ENCODE measurements at regions of chr3 and their contacts with region 1.

Region 1: GRCh38 chr3:134308350-134308891 is 57.8 kb upstream of the RYK start:
- DNase-seq: peak; percentile 67
- H3K4me3 ChIP-seq: no peak overlapping the region
- H3K27ac ChIP-seq: peak overlapping the region; percentile 19
- H3K4me1 ChIP-seq: peaks cover 40% of the 10 kb centered on the region
- H3K27me3 ChIP-seq: no peaks in the 10 kb centered on the region
- CTCF ChIP-seq: peak; percentile 99

Region 2: DNA sequence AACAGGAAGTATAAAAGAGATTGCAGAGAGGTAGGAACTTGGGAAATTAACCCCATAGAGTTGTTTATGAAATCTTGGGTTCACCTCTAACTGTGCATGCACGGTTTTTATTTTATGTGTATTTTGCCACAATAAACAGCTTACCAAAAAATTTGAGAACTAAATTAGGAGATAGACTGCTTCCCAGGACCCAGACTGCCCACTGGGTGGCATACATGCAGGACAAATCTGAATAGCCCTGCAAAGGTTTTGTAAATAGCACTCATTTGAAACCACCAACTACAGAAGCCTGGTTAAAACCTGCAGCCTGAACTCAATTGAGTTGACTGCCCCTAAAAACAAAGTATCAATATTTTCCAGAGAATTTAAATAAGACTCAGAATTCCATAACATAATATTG is 182.3 kb before region 1 on chr3:
- CTCF ChIA-PET with region 1: no interaction called
- dilution Hi-C with region 1: no loop called
- in situ Hi-C with region 1: no loop called
- intact Hi-C with region 1: loop called (anchors 10 kb)
- DNase-seq: no peak
- H3K4me3 ChIP-seq: no peak overlapping the region
- H3K27ac ChIP-seq: no peak overlapping the region
- H3K4me1 ChIP-seq: no peaks in the 10 kb centered on the region
- H3K27me3 ChIP-seq: no peaks in the 10 kb centered on the region
- CTCF ChIP-seq: peak; percentile 17 to 35

Region 3: DNA sequence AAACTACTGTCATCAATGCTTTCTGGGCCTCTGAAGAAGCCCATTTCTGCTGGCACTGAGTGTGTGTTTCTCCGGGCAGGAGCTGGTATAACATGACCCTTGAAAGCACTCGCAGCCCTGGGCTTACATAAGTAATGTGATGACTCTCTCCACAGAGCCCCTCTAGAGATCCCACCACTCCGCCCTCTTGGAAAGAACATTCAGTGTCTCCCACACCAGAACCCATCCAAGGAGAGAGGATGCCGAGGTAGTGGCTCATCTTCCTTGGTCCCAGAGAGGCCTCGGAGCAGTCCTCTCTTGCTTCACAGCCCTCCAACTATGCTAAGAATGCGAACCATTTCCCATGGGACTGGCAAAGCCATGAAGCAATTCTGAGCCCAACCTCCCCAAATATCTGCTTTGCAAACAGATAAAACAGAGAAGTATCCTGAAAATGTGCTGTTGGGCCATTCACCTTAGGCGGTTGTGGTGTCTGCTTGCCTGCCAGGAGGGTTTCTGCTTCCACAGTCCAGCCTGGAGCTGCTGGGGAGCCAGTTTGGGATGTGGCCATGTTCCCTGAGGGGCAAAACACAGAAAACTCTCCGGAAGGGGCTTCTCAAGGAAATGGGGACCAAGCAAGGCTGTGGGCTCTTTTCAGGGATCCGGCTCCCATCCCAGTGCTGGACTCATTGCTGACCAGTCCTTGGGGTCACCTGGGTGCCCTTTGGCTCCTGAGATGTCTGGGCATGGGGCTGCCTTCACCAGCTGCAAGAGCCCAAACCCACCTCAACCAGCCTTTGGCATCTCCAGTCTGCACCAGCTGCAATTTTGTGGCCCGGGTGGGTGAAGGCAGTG is 18.6 kb after region 1 on chr3:
- CTCF ChIA-PET with region 1: no interaction called
- dilution Hi-C with region 1: no loop called
- in situ Hi-C with region 1: no loop called
- intact Hi-C with region 1: loop called (anchors 1 kb)
- DNase-seq: peak; percentile 86
- H3K4me3 ChIP-seq: peak overlapping the region in 1 of 3 experiments; percentile 6
- H3K27ac ChIP-seq: peak overlapping the region; percentile 84
- H3K4me1 ChIP-seq: peaks cover 75% of the 10 kb centered on the region
- H3K27me3 ChIP-seq: no peaks in the 10 kb centered on the region
- CTCF ChIP-seq: no peak

Region 4: GRCh38 chr3:134357261-134358184 is 49.1 kb after region 1 on chr3:
- CTCF ChIA-PET with region 1: interaction called, 3 read pairs
- dilution Hi-C with region 1: no loop called
- in situ Hi-C with region 1: loop called (anchors 5 kb)
- intact Hi-C with region 1: loop called (anchors 1 kb)
- DNase-seq: peak; percentile 82
- H3K4me3 ChIP-seq: no peak overlapping the region
- H3K27ac ChIP-seq: peak overlapping the region; percentile 43
- H3K4me1 ChIP-seq: peaks cover 70% of the 10 kb centered on the region
- H3K27me3 ChIP-seq: no peaks in the 10 kb centered on the region
- CTCF ChIP-seq: no peak

Region 5: DNA sequence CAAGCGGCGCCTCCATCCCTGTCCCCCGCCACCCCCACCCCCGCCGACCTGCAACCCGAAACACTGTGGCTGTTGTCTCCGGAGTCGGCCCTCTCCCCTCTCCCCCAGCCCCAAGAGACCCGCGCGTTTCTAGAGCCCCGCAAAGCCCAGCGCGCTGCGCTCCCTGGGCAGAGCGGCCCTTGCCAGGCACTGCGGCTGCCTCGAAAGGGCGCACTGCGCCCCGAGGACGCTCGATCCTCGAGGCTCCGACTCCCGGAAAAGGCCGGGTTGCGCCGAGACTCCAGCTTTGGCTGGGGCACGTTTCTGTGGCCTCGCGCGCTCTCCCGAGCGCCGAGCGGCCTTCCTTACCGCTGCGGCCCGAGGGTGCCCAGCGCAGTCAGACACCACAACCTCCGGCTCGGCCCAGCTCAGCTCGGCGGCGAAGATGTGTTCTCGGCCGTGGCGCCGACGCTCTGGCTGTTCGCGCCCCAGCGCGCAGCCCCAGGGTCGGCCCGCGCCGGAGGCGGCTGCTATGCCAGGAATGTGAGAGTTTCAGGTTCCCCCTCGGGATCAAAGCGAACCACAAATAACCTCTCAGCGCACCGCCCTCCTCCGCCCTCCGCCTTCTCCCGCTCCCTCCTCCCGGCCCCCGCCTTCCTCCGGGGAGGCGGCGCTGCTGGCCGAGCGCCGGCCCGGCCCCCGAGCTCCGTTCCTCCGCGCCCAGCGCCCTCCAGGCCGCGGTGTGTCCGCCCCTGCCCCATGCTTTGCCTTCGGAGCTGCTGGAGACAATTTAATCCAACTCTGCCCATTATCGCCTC is 65.8 kb after region 1 on chr3 and contains the start of gene AMOTL2:
- CTCF ChIA-PET with region 1: interaction called, 11 read pairs
- dilution Hi-C with region 1: no loop called
- in situ Hi-C with region 1: no loop called
- intact Hi-C with region 1: loop called (anchors 1 kb)
- DNase-seq: peak; percentile 94
- H3K4me3 ChIP-seq: peak within 1 kb of the TSS; percentile 76 to 84 (median 79)
- H3K27ac ChIP-seq: peak within 1 kb of the TSS; percentile 80
- H3K4me1 ChIP-seq: peaks cover 60% of the 10 kb centered on the region
- H3K27me3 ChIP-seq: no peaks in the 10 kb centered on the region
- CTCF ChIP-seq: no peak
- total RNA-seq, gene AMOTL2: 116 to 144 TPM

Region 6: DNA sequence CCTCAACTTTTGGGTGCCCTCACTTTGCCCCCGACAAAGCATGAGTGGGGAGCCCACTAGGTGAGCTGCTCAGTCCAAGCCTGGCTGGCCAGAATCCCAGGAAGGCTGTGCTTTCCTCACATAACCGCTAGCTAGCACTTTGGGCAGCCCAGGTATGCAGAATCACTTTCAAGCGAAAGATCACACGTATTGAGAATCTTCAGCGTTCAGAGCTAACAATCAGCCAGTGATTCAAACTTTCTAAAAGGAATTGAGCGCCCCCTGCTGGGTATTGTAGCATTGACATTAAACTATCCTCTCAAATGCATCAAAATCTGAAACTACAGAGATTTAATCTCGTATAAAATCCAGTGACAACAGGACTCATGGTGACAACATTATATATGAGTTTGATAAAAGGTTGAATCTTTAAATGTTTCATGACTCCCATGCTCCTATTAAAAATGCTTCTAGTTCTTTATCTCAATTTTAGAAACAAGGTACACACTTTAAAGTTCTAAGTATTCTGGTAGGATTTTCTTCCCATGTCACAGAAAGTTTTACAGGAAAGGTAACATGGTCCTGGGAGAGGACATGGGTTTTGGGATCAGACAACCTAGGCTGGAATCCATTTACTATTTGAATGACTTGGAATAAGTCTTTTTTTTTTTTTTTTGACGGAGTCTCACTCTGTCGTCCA is 165.6 kb after region 1 on chr3:
- CTCF ChIA-PET with region 1: interaction called, 22 read pairs
- dilution Hi-C with region 1: no loop called
- in situ Hi-C with region 1: loop called in 1 of 2 experiments (anchors 5 kb)
- intact Hi-C with region 1: loop called (anchors 1 kb)
- DNase-seq: peak; percentile 82
- H3K4me3 ChIP-seq: no peak overlapping the region
- H3K27ac ChIP-seq: peak overlapping the region; percentile 49
- H3K4me1 ChIP-seq: peaks cover 58% of the 10 kb centered on the region
- H3K27me3 ChIP-seq: no peaks in the 10 kb centered on the region
- CTCF ChIP-seq: peak; percentile 60 to 70

Region 7: DNA sequence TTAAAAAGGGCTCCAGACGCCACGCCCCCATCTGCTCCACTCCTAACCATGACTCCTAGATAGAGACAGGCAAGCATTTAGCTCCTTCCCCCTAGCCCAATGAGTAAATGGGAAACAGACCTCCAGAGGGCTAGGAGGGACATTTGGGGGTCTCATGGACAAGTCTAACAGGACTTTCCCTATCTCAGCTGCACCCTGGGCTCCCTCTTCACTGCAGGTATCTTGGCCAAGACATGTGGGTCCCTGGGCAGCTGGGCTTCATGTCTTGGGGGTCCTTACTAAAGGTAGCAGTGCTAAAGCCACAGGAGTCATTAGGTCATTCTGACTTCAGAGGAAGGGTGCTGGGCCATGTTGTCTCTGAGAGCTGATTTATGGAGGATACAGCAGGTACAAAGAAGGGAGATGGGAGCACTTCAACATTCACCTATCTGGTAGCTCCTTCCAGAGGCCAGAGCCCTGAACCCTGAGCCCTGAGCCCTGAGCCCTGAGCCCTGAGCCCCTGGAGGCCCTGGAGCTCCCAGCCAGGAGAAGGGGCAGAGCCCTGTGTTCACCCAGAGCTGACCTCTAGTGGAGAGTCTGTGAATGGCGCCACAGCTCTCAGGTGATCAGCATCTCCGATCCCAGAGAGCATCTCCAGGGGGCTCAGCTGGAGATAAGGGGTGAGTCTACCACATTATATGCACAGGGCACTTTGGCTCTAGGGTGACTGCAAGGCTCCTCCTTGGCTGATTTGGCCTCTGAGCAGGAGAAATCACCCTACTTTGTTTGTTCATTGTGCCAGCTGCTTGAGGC is 446.5 kb after region 1 on chr3:
- CTCF ChIA-PET with region 1: no interaction called
- dilution Hi-C with region 1: no loop called
- in situ Hi-C with region 1: no loop called
- intact Hi-C with region 1: loop called (anchors 10 kb)
- DNase-seq: peak; percentile 40
- H3K4me3 ChIP-seq: no peak overlapping the region
- H3K27ac ChIP-seq: no peak overlapping the region
- H3K4me1 ChIP-seq: no peaks in the 10 kb centered on the region
- H3K27me3 ChIP-seq: no peaks in the 10 kb centered on the region
- CTCF ChIP-seq: peak; percentile 80 to 87

Measured in mammary epithelial cell (primary cell).